CD4-positive, alpha-beta T cell (primary cell): ENCODE measurements at regions of chr11 and their contacts with region 1.

Region 1: DNA sequence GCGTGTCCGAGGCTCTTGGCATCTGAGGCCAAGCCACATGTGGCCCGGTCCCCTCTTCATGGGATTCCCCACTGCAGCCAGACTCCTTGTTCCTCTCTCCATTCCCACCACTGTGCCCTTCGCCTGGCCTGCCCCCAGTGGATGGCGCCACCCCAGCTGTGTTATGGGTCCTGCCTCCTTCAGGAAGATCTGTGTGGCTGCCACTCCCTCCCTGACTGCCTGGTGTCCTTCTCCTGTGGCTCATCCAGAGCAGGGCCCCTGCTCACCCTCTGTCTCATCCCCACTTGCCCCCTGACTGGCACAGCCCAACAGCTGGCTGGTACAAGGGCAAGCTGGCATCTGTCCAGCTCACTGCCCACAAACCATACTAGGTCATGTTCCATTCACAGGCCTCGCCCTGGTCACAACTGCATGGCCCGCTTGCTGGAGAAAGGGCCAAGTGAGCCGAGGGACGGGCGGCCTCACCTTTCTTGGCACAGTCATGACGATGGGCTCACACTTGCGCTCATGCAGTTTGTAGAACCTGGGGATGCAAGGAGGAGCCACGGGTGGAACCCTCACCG is 1.9 kb upstream of the PTPRCAP start:
- DNase-seq: peak in 5 of 14 experiments; percentile 23 to 64 (median 48)
- ATAC-seq: no peak
- H3K4me3 ChIP-seq: peak overlapping the region; percentile 97
- H3K4me3 Mint-ChIP-seq: peak overlapping the region; percentile 98
- H3K27ac ChIP-seq: peak overlapping the region; percentile 72 to 94
- H3K27ac Mint-ChIP-seq: peak overlapping the region; percentile 98
- H3K4me1 ChIP-seq: peaks cover 79% of the 10 kb centered on the region
- H3K4me1 Mint-ChIP-seq: peaks cover 63% of the 10 kb centered on the region
- H3K27me3 ChIP-seq: no peaks in the 10 kb centered on the region
- H3K27me3 Mint-ChIP-seq: no peaks in the 10 kb centered on the region
- CTCF ChIP-seq: no peak

Region 2: DNA sequence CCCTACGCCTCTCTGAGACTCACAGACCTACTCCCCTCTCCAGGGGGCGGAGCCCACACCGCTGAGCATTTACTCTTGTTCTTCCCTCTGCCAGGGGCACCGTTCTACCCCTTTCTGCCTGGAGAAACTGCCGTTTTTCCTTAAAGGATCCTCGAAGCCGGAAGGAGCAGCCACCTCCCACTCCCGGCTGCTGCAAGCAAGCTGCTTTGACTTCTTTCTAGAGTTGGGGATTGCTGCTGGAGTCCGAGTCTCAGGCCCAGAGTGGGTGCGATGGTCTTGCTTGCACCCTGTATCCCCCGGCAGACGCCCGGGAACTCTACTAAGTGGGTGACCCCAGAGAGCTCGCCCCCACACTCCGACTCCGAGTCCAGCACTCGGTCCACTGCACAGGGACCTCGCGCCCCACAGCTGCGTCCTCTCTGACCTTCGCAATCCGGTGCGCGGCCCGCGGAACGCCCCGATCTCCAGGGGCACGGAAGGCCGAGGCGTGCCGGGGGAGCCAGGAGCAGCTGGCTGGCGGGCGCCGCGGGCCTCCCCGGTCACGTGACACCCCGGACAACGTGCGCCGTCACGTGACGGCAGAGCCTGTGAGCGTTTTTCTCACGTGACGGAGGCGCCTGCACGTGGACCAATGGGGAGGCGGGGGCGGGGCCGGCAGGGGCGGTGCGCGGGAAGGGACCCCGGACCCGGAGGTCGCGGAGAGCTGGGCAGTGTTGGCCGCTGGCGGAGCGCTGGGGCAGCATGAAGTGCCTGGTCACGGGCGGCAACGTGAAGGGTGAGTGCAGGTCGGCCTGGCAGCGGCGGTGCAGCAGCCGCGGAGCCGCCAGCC is 47.9 kb before region 1 on chr11 and contains the start of gene RAD9A:
- CTCF ChIA-PET with region 1: no interaction called
- POLR2A ChIA-PET with region 1: interaction called, 22 read pairs
- intact Hi-C with region 1: no loop called
- DNase-seq: peak; percentile 82 to 97 (median 90)
- ATAC-seq: peak; percentile 83
- H3K4me3 ChIP-seq: peak within 1 kb of the TSS; percentile 90
- H3K4me3 Mint-ChIP-seq: peak within 1 kb of the TSS; percentile 88
- H3K27ac ChIP-seq: peak within 1 kb of the TSS; percentile 55 to 77
- H3K27ac Mint-ChIP-seq: peak within 1 kb of the TSS; percentile 76
- H3K4me1 ChIP-seq: peaks cover 42% of the 10 kb centered on the region
- H3K4me1 Mint-ChIP-seq: peaks cover 38% of the 10 kb centered on the region
- H3K27me3 ChIP-seq: no peaks in the 10 kb centered on the region
- H3K27me3 Mint-ChIP-seq: no peaks in the 10 kb centered on the region
- CTCF ChIP-seq: no peak
- total RNA-seq, gene RAD9A: 19.3 to 20.3 TPM

Region 3: GRCh38 chr11:67409261-67409666 is 30.1 kb before region 1 on chr11:
- CTCF ChIA-PET with region 1: interaction called, 6 read pairs
- POLR2A ChIA-PET with region 1: interaction called, 411 read pairs
- intact Hi-C with region 1: loop called (anchors 2 kb)
- DNase-seq: peak in 13 of 14 experiments; percentile 45 to 92 (median 76)
- ATAC-seq: peak; percentile 62
- H3K4me3 ChIP-seq: peak overlapping the region; percentile 100
- H3K4me3 Mint-ChIP-seq: peak overlapping the region; percentile 88
- H3K27ac ChIP-seq: peak overlapping the region; percentile 75 to 84
- H3K27ac Mint-ChIP-seq: peak overlapping the region; percentile 98
- H3K4me1 ChIP-seq: peaks cover 98% of the 10 kb centered on the region
- H3K4me1 Mint-ChIP-seq: peaks cover 91% of the 10 kb centered on the region
- H3K27me3 ChIP-seq: no peaks in the 10 kb centered on the region
- H3K27me3 Mint-ChIP-seq: no peaks in the 10 kb centered on the region
- CTCF ChIP-seq: no peak

Region 4: GRCh38 chr11:67428052-67428914 is 11.1 kb before region 1 on chr11 and contains the start of gene RPS6KB2:
- CTCF ChIA-PET with region 1: interaction called, 3 read pairs
- POLR2A ChIA-PET with region 1: interaction called, 82 read pairs
- intact Hi-C with region 1: no loop called
- DNase-seq: peak; percentile 96 to 100 (median 99)
- ATAC-seq: peak; percentile 84
- H3K4me3 ChIP-seq: peak within 1 kb of the TSS; percentile 92
- H3K4me3 Mint-ChIP-seq: peak within 1 kb of the TSS; percentile 98
- H3K27ac ChIP-seq: peak within 1 kb of the TSS; percentile 85 to 86
- H3K27ac Mint-ChIP-seq: peak within 1 kb of the TSS; percentile 96
- H3K4me1 ChIP-seq: peaks cover 59% of the 10 kb centered on the region
- H3K4me1 Mint-ChIP-seq: peaks cover 33% of the 10 kb centered on the region
- H3K27me3 ChIP-seq: no peaks in the 10 kb centered on the region
- H3K27me3 Mint-ChIP-seq: no peaks in the 10 kb centered on the region
- CTCF ChIP-seq: no peak
- total RNA-seq, gene RPS6KB2: 69.3 to 72.0 TPM

Region 5: DNA sequence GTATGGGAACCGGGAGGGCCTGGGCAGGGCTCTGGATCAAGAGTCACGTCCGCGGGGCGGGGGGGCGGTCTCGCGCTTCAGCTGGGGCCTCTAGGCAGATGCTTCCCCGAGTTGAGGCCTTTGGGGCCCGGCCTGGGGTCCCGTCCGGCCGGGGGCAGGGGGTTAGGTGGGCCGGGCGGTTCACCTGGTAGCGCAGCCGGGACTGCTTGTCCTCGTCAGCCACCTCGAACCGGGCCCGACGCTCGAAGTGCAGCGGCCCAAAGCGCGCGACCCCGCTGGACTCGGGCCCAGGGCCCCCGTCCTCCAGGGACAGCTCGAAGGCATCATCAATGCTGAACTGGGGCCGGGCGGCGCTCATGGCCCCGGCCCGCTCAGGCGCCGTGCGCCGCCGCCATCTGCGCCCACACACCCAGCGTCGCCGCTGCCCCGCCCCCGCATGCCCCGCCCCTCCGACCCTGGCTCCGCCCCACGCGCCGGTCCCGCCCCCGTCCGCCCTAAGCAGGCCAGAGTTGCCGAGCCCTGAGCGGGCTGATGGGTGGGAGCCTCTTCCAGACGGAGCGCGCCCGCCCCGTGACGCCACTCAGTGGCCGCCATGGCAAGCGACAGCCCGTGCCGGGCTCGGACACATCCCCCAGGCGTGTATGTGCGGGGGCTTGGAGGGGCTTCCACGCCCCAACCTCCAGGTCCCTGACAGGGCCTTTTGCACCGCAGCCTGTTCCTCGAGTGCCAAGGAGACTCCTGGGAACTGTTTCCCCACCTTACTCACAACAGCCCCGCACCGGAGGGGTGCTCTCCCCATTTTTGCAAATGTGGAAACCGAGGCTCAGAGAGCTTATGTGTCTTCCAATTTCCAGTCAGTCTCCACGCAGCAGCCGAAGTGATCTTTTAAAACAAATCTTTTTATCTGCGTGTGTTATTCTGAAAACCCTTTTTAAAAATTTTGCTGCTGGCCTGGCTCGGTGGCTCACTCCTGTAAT is 29.7 kb after region 1 on chr11 and contains the start of gene TMEM134:
- CTCF ChIA-PET with region 1: interaction called, 11 read pairs
- POLR2A ChIA-PET with region 1: interaction called, 131 read pairs
- intact Hi-C with region 1: loop called in 1 of 2 experiments (anchors 2 kb)
- DNase-seq: peak; percentile 86 to 96 (median 92)
- ATAC-seq: peak; percentile 71
- H3K4me3 ChIP-seq: peak within 1 kb of the TSS; percentile 83
- H3K4me3 Mint-ChIP-seq: peak within 1 kb of the TSS; percentile 91
- H3K27ac ChIP-seq: peak within 1 kb of the TSS; percentile 66 to 81
- H3K27ac Mint-ChIP-seq: peak within 1 kb of the TSS; percentile 88
- H3K4me1 ChIP-seq: peaks cover 56% of the 10 kb centered on the region
- H3K4me1 Mint-ChIP-seq: peaks cover 42% of the 10 kb centered on the region
- H3K27me3 ChIP-seq: no peaks in the 10 kb centered on the region
- H3K27me3 Mint-ChIP-seq: no peaks in the 10 kb centered on the region
- CTCF ChIP-seq: no peak
- total RNA-seq, gene TMEM134: 49.9 to 52.4 TPM

Region 6: GRCh38 chr11:67489885-67490274 is 50.5 kb after region 1 on chr11:
- CTCF ChIA-PET with region 1: no interaction called
- POLR2A ChIA-PET with region 1: interaction called, 87 read pairs
- intact Hi-C with region 1: no loop called
- DNase-seq: peak in 1 of 14 experiments; percentile 31
- ATAC-seq: no peak
- H3K4me3 ChIP-seq: no peak overlapping the region
- H3K4me3 Mint-ChIP-seq: no peak overlapping the region
- H3K27ac ChIP-seq: no peak overlapping the region
- H3K27ac Mint-ChIP-seq: peak overlapping the region; percentile 74
- H3K4me1 ChIP-seq: peaks cover 57% of the 10 kb centered on the region
- H3K4me1 Mint-ChIP-seq: peaks cover 44% of the 10 kb centered on the region
- H3K27me3 ChIP-seq: no peaks in the 10 kb centered on the region
- H3K27me3 Mint-ChIP-seq: no peaks in the 10 kb centered on the region
- CTCF ChIP-seq: no peak